Panc1 (cell line): ENCODE measurements at regions of chr10 and their contacts with region 1.

Region 1: GRCh38 chr10:51879238-51879637 is 179.8 kb upstream of the CSTF2T start:
- DNase-seq: no peak
- ATAC-seq: peak; percentile 65; the same call in 1 of the 2 replicates
- H3K4me3 ChIP-seq: no peak overlapping the region
- H3K27ac ChIP-seq: no peak overlapping the region
- H3K4me1 ChIP-seq: no peaks in the 10 kb centered on the region
- H3K27me3 ChIP-seq: no peaks in the 10 kb centered on the region
- CTCF ChIP-seq: no peak

Region 2: GRCh38 chr10:50946991-50947781 is 932.1 kb before region 1 on chr10:
- CTCF ChIA-PET with region 1: no interaction called
- POLR2A ChIA-PET with region 1: no interaction called
- in situ Hi-C with region 1: no loop called
- intact Hi-C with region 1: no loop called
- DNase-seq: no peak
- ATAC-seq: no peak
- H3K4me3 ChIP-seq: no peak overlapping the region
- H3K27ac ChIP-seq: no peak overlapping the region
- H3K4me1 ChIP-seq: no peaks in the 10 kb centered on the region
- H3K27me3 ChIP-seq: peaks cover 2% of the 10 kb centered on the region; the same call in 1 of the 2 replicates
- CTCF ChIP-seq: no peak

Region 3: DNA sequence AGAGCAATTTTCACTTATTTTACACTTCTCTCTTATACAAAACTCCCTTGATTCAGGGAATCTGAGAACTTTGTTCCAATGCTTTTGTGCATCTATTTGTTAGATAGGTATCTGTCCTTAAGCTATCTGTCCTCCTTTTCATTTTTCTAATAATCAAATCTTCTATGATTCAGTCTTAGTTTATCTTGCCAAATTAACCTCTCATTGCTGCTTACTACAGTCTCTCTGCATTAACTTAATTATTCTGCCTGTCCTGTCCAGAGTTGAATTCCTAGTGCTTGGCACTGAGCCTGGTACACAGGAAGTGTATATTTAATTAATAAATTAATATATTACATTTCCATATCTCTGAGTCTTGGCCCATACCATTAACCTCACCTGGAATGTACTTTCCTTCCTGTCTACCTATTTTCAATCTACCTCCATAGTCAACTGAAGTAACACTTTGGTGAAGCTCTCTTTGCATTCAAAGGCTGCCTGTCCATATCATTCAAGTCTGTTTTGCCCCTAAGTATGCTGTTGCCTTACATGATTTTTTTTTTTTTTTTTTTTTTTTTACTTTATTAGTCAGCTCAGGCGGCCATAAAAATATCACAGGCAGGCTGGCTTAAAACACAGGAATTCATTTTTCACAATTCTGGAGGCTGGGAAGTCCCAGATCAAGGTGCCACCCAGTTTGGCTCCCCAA is 113.8 kb before region 1 on chr10:
- CTCF ChIA-PET with region 1: no interaction called
- POLR2A ChIA-PET with region 1: interaction called, 11 read pairs
- in situ Hi-C with region 1: no loop called
- intact Hi-C with region 1: no loop called
- DNase-seq: no peak
- ATAC-seq: no peak
- H3K4me3 ChIP-seq: no peak overlapping the region
- H3K27ac ChIP-seq: no peak overlapping the region
- H3K4me1 ChIP-seq: no peaks in the 10 kb centered on the region
- H3K27me3 ChIP-seq: no peaks in the 10 kb centered on the region
- CTCF ChIP-seq: no peak